ENCODE measurements at regions of chr7 and their contacts with region 1.

Region 1: DNA sequence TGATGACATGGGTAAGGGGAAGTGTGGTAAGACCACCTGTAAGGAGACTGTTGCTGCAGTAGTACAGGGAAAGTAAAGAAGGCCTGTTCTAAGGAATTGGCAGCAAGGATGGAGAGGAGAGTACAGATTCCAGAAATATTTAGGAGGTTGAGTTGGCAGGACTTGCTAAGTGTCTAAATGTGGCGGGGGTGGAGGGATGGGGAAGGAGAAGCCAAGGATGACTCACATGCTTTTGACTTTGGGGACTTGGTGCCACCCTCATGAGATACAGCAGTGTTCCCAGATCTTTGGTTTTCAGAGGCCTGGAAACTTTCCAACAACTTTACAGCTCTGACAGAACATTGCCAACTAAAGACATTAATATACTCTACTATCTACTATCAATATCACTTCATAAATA is 45.4 kb downstream of the CDK6 start:
- DNase-seq: no peak
- ATAC-seq: peak in 2 of 8 donors; percentile 54 to 85
- H3K4me3 ChIP-seq: no peak overlapping the region
- H3K27ac ChIP-seq: no peak overlapping the region
- H3K4me1 ChIP-seq: peaks cover 0 to 52% (median 40%) of the 10 kb centered on the region in 9 donors
- H3K27me3 ChIP-seq: no peaks in the 10 kb centered on the region
- CTCF ChIP-seq: no peak

Region 2: GRCh38 chr7:92717993-92718716 is 72.8 kb before region 1 on chr7:
- intact Hi-C with region 1: loop called in 1 of 10 experiments (anchors 5 kb)
- DNase-seq: peak; percentile 24 to 80
- ATAC-seq: peak; percentile 80 to 95 (median 92)
- H3K4me3 ChIP-seq: peak overlapping the region in 9 of 10 donors; percentile 14 to 57 (median 42)
- H3K27ac ChIP-seq: peak overlapping the region; percentile 78 to 94 (median 88)
- H3K4me1 ChIP-seq: peaks cover under 1 to 54% (median 30%) of the 10 kb centered on the region in 9 donors
- H3K27me3 ChIP-seq: no peaks in the 10 kb centered on the region
- CTCF ChIP-seq: no peak

Region 3: GRCh38 chr7:93062599-93062998 is 271.6 kb after region 1 on chr7:
- intact Hi-C with region 1: no loop called
- DNase-seq: no peak
- ATAC-seq: no peak
- H3K4me3 ChIP-seq: no peak overlapping the region
- H3K27ac ChIP-seq: no peak overlapping the region
- H3K4me1 ChIP-seq: no peaks in the 10 kb centered on the region
- H3K27me3 ChIP-seq: peaks cover 0 to 7% (median 0%) of the 10 kb centered on the region in 7 donors
- CTCF ChIP-seq: no peak

Measured in heart right ventricle (tissue), 16 donors.